ENCODE measurements at regions of chr12 and their contacts with region 1.

Region 1: GRCh38 chr12:6688999-6689882 is at the start of gene ZNF384:
- DNase-seq: peak; percentile 97
- H3K4me3 Mint-ChIP-seq: peak within 1 kb of the TSS; percentile 92
- H3K27ac Mint-ChIP-seq: peak within 1 kb of the TSS; percentile 97
- H3K4me1 Mint-ChIP-seq: peaks cover 44% of the 10 kb centered on the region
- H3K27me3 Mint-ChIP-seq: no peaks in the 10 kb centered on the region
- total RNA-seq, gene ZNF384: 55.3 to 56.3 TPM

Region 2: GRCh38 chr12:6493497-6494257 is 195.6 kb before region 1 on chr12 and contains the start of gene NCAPD2:
- CTCF ChIA-PET with region 1: no interaction called
- POLR2A ChIA-PET with region 1: no interaction called
- intact Hi-C with region 1: loop called (anchors 1 kb)
- DNase-seq: peak; percentile 98
- H3K4me3 Mint-ChIP-seq: peak within 1 kb of the TSS; percentile 94
- H3K27ac Mint-ChIP-seq: peak within 1 kb of the TSS; percentile 100
- H3K4me1 Mint-ChIP-seq: peaks cover 38% of the 10 kb centered on the region
- H3K27me3 Mint-ChIP-seq: no peaks in the 10 kb centered on the region
- total RNA-seq, gene NCAPD2: 192 to 196 TPM

Region 3: GRCh38 chr12:6607751-6608591 is 81.3 kb before region 1 on chr12:
- CTCF ChIA-PET with region 1: interaction called, 10 read pairs
- POLR2A ChIA-PET with region 1: interaction called, 3 read pairs
- intact Hi-C with region 1: loop called (anchors 1 kb)
- DNase-seq: peak; percentile 82
- H3K4me3 Mint-ChIP-seq: no peak overlapping the region
- H3K27ac Mint-ChIP-seq: no peak overlapping the region
- H3K4me1 Mint-ChIP-seq: peaks cover 53% of the 10 kb centered on the region
- H3K27me3 Mint-ChIP-seq: no peaks in the 10 kb centered on the region

Region 4: DNA sequence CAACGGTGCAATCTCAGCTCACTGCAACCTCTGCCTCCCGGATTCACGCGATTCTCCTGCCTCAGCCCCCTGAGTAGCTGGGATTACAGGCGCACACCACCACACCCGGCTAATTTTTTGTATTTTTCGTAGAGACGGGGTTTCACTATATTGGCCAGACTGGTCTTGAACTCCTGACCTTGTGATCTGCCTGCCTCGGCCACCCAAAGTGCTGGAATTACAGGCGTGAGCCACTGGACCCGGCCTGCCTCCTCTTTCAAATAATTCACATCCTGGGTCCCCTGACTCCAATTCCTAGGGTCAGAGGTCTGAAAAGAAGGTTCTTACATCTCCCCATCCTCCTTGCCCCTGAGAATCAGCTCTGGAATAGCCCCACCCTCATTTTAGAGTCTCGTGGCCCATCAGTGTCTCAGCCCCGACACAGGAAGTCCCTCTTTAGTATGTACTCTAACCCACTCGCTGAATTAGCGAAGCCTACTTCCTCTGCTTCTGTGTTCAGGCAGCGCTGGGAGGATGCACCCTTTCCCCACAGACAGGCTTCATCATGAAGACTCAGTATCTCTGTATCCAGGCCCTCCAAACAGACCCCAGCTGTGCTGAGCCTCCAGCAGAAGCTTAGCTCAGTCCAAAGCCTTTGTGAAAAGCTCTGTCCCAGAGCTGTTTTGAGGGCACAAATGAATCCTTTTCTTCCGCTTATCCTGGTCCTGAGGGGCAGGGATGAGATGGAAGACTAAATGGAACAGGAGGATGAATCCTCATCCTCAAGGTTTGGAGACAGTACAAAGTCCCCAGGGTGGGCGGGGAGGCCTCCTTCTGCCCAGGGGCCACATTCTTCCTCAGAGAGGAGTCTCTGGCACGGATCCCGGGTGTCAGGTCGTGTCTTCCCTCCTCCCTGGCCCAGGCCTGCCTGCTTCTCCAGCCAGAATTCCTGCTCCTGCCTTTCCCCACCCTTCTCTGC is 56.9 kb before region 1 on chr12:
- CTCF ChIA-PET with region 1: interaction called, 11 read pairs
- POLR2A ChIA-PET with region 1: interaction called, 3 read pairs
- intact Hi-C with region 1: no loop called
- DNase-seq: peak; percentile 69
- H3K4me3 Mint-ChIP-seq: peak overlapping the region; percentile 73
- H3K27ac Mint-ChIP-seq: peak overlapping the region; percentile 91
- H3K4me1 Mint-ChIP-seq: peaks cover 53% of the 10 kb centered on the region
- H3K27me3 Mint-ChIP-seq: no peaks in the 10 kb centered on the region

Region 5: GRCh38 chr12:6752921-6753771 is 63.9 kb after region 1 on chr12 and contains the start of gene MLF2:
- CTCF ChIA-PET with region 1: interaction called, 8 read pairs
- POLR2A ChIA-PET with region 1: interaction called, 6 read pairs
- intact Hi-C with region 1: loop called (anchors 1 kb)
- DNase-seq: peak; percentile 99
- H3K4me3 Mint-ChIP-seq: peak within 1 kb of the TSS; percentile 93
- H3K27ac Mint-ChIP-seq: peak within 1 kb of the TSS; percentile 96
- H3K4me1 Mint-ChIP-seq: peaks cover 24% of the 10 kb centered on the region
- H3K27me3 Mint-ChIP-seq: no peaks in the 10 kb centered on the region
- total RNA-seq, gene MLF2: 140 to 141 TPM

Region 6: DNA sequence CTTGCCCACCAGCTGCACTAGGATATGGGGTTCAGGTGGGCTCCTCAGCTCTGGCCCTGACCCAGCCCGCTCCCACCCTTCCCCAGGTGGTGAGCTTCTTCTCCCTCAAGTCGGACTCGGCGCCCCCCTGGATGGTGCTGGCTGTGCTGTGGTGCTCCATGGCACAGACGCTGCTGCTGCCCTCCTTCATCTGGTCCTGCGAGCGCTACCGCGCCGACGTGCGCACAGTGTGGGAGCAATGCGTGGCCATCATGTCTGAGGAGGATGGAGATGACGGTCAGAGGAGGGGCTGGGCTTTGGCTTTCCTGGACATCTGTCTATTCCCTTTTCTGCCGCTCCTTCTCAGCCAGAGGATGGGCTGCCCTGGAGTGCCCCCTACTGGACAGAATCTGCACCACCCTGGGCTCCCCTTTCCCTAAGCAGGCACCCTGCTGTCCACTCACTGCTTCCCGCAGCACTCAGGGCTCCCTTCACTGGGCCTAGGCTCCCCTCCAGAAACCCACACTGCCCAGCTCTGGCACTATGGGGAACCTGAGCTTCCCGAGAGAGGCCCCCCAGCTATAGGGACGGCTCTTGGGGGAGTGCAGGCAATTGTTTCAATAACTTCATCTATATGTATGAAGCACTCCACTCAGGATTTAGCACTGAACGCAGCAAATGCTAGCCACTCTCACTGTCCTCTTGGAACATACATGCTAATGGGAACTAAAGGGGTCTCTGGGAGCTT is 136.3 kb after region 1 on chr12:
- CTCF ChIA-PET with region 1: interaction called, 6 read pairs
- POLR2A ChIA-PET with region 1: interaction called, 3 read pairs
- intact Hi-C with region 1: loop called (anchors 5 kb)
- DNase-seq: peak; percentile 90
- H3K4me3 Mint-ChIP-seq: no peak overlapping the region
- H3K27ac Mint-ChIP-seq: peak overlapping the region; percentile 16
- H3K4me1 Mint-ChIP-seq: peaks cover 30% of the 10 kb centered on the region
- H3K27me3 Mint-ChIP-seq: peaks cover 29% of the 10 kb centered on the region

Measured in activated CD4-positive, alpha-beta memory T cell treated with anti-CD3 and anti-CD28 coated beads for 36 hours (primary cell).